IMR-90 (cell line): ENCODE measurements at regions of chr2 and their contacts with region 1.

Region 1: GRCh38 chr2:221075203-221075602 is 496.9 kb downstream of the EPHA4 start:
- DNase-seq: peak; percentile 92
- ATAC-seq: peak; percentile 87
- H3K4me3 ChIP-seq: no peak overlapping the region
- H3K27ac ChIP-seq: peak overlapping the region; percentile 69; the same call in 1 of the 2 replicates
- H3K4me1 ChIP-seq: peaks cover 6% of the 10 kb centered on the region; the same call in 1 of the 2 replicates
- H3K27me3 ChIP-seq: no peaks in the 10 kb centered on the region
- CTCF ChIP-seq: no peak
- POLR2A ChIP-seq: no peak
- RAD21 ChIP-seq: no peak

Region 2: GRCh38 chr2:221018262-221018661 is 56.9 kb before region 1 on chr2:
- CTCF ChIA-PET with region 1: no interaction called
- POLR2A ChIA-PET with region 1: no interaction called
- dilution Hi-C with region 1: no loop called
- in situ Hi-C with region 1: no loop called
- intact Hi-C with region 1: loop called (anchors 1 kb)
- DNase-seq: no peak
- ATAC-seq: no peak
- H3K4me3 ChIP-seq: no peak overlapping the region
- H3K27ac ChIP-seq: no peak overlapping the region
- H3K4me1 ChIP-seq: peaks cover 6% of the 10 kb centered on the region
- H3K27me3 ChIP-seq: no peaks in the 10 kb centered on the region
- CTCF ChIP-seq: no peak
- POLR2A ChIP-seq: no peak
- RAD21 ChIP-seq: no peak

Region 3: DNA sequence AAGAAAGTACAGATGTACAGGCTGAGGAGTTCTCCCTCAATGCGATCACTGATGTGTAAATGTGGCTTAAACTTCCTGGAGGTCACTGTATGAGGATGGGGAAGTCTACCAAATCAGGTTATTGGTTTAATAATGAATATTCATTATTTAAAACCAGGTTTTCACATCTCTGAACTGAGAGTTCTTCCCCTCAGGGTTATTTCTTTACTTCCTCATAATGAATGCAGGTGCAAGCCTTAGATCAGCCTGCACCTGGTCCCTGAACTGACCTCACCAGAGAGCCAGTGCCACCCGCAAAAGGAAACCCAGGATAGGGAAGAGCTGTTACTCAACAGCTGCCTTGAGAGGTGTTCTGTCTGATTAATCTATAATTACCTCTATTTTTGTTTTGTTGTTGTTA is 127.9 kb after region 1 on chr2:
- CTCF ChIA-PET with region 1: no interaction called
- POLR2A ChIA-PET with region 1: no interaction called
- dilution Hi-C with region 1: no loop called
- in situ Hi-C with region 1: no loop called
- intact Hi-C with region 1: no loop called
- DNase-seq: no peak
- ATAC-seq: no peak
- H3K4me3 ChIP-seq: no peak overlapping the region
- H3K27ac ChIP-seq: no peak overlapping the region
- H3K4me1 ChIP-seq: no peaks in the 10 kb centered on the region
- H3K27me3 ChIP-seq: no peaks in the 10 kb centered on the region
- CTCF ChIP-seq: no peak
- POLR2A ChIP-seq: no peak
- RAD21 ChIP-seq: no peak